ENCODE measurements at regions of chr1 and their contacts with region 1.

Region 1: DNA sequence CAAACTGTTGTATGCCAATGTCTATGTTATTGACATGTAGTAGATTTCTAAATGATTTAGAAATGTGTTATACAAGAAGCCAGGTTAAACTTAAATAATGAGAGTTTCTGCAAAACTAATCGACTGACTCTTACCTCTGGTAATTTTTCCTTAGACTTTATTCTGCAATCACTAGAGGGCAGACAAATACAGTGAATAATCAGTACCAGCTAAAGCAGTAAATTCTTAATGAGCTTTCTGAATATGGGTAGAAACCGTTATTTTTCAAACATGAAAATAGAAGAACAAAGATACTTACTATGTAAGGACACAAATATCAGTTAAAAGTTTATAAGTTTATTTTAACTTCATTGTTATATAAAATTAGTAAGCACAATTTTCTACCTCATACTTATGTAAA is 97.9 kb upstream of the RGS1 start:
- H3K4me3 ChIP-seq: no peak overlapping the region
- H3K27ac ChIP-seq: no peak overlapping the region
- H3K4me1 ChIP-seq: no peaks in the 10 kb centered on the region
- CTCF ChIP-seq: no peak

Region 2: GRCh38 chr1:192580351-192580962 is 102.8 kb after region 1 on chr1:
- CTCF ChIA-PET with region 1: interaction called, 15 read pairs
- POLR2A ChIA-PET with region 1: no interaction called
- H3K4me3 ChIP-seq: no peak overlapping the region
- H3K27ac ChIP-seq: no peak overlapping the region
- H3K4me1 ChIP-seq: no peaks in the 10 kb centered on the region
- CTCF ChIP-seq: no peak

Region 3: GRCh38 chr1:192609110-192610079 is 131.8 kb after region 1 on chr1:
- CTCF ChIA-PET with region 1: interaction called, 18 read pairs
- POLR2A ChIA-PET with region 1: no interaction called
- H3K4me3 ChIP-seq: no peak overlapping the region
- H3K27ac ChIP-seq: no peak overlapping the region
- H3K4me1 ChIP-seq: no peaks in the 10 kb centered on the region
- CTCF ChIP-seq: no peak

Region 4: DNA sequence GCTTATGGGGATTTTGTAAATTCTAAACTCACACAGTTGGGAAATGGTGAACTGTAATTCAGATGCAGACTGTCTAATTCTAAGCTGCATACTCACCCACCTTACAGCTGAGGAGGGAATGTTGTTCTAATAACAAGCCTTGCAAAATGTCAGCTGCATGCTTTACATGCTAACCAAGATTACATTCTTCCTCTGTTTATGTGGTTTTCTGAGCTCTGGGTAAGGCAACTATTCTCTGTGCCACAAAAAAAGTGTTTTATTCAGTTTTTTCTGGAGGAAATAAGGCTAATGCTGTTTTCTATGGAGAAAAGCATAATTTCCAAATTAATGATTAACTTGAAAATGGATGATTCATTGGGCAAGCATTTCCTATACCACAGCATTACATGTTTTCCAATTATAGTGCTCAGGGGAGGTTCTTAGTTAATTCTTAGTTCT is 223.2 kb after region 1 on chr1:
- CTCF ChIA-PET with region 1: no interaction called
- POLR2A ChIA-PET with region 1: no interaction called
- H3K4me3 ChIP-seq: no peak overlapping the region
- H3K27ac ChIP-seq: no peak overlapping the region
- H3K4me1 ChIP-seq: no peaks in the 10 kb centered on the region; the same call in 1 of the 2 replicates
- CTCF ChIP-seq: no peak

Region 5: DNA sequence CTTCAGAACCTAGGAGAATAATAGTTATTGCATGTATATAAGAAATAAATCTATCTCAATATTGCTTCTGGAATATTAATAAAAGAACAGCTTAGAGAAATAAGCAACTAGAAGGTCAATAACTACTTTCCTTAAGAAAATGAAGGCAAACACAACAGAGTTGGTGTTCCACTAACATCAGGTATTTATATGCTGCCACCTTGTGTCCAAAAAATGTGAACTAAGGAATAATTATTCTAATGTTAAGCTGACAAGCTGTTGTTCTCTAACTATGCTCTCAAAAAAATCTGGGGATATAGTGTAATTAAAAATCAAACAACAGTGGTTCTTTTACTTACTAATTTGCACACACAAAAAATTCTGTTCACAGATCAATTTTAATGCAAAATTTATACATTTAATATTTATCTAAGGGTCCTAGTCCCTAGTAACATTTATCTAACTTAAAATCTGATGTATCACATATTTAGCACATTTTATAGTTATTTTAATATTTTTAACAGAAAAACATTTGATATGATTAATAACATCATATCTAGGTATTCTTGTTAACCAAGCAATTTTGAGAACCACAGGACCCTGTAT is 541.9 kb after region 1 on chr1:
- CTCF ChIA-PET with region 1: interaction called, 14 read pairs
- POLR2A ChIA-PET with region 1: no interaction called
- H3K4me3 ChIP-seq: no peak overlapping the region
- H3K27ac ChIP-seq: no peak overlapping the region
- H3K4me1 ChIP-seq: no peaks in the 10 kb centered on the region
- CTCF ChIP-seq: no peak